ENCODE measurements at regions of chr9 and their contacts with region 1.

Region 1: GRCh38 chr9:21974548-21975409 is 19.4 kb downstream of the CDKN2A start:
- DNase-seq: peak; percentile 75
- H3K4me3 Mint-ChIP-seq: peak overlapping the region; percentile 56
- H3K27ac Mint-ChIP-seq: no peak overlapping the region
- H3K4me1 Mint-ChIP-seq: peaks cover 14% of the 10 kb centered on the region
- H3K27me3 Mint-ChIP-seq: peaks cover 81% of the 10 kb centered on the region

Region 2: DNA sequence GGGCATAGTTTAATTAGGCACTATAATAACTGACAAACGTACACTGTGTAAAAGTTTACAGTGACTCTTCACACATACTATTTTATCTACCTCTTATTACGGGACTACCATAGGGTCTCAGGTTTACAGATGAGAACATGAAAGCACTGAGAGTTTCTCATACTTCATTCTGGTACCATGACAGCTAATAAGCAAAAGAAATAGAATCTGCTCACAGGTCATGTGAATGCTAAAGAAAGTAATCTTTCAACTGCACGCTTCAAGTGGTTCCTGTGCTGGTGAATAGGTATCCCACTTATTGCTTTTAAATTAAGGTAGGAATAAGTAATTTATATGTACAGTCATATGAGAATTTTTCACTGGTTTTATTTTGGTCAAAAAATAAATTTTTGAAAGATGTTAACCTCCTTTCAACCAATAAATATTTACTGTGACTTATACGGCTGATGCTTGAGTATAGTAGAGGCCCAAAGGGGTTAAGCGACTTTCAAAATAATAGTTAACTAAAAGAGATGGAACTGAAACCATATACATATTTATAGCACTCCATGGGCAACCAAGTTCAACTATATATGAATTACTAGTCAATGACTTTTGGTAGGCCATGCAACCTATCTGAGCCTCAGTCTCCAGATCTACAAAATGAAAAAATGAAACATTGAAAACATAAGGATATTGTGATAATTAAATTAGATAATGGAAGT is 11.3 kb after region 1 on chr9:
- CTCF ChIA-PET with region 1: interaction called, 5 read pairs
- intact Hi-C with region 1: loop called (anchors 1 kb)
- DNase-seq: no peak
- H3K4me3 Mint-ChIP-seq: no peak overlapping the region
- H3K27ac Mint-ChIP-seq: no peak overlapping the region
- H3K4me1 Mint-ChIP-seq: peaks cover 3% of the 10 kb centered on the region
- H3K27me3 Mint-ChIP-seq: peaks cover 71% of the 10 kb centered on the region

Region 3: GRCh38 chr9:22060831-22061383 is 86.1 kb after region 1 on chr9:
- CTCF ChIA-PET with region 1: no interaction called
- intact Hi-C with region 1: no loop called
- DNase-seq: no peak
- H3K4me3 Mint-ChIP-seq: no peak overlapping the region
- H3K27ac Mint-ChIP-seq: no peak overlapping the region
- H3K4me1 Mint-ChIP-seq: peaks cover 21% of the 10 kb centered on the region
- H3K27me3 Mint-ChIP-seq: peaks cover 21% of the 10 kb centered on the region

Region 4: DNA sequence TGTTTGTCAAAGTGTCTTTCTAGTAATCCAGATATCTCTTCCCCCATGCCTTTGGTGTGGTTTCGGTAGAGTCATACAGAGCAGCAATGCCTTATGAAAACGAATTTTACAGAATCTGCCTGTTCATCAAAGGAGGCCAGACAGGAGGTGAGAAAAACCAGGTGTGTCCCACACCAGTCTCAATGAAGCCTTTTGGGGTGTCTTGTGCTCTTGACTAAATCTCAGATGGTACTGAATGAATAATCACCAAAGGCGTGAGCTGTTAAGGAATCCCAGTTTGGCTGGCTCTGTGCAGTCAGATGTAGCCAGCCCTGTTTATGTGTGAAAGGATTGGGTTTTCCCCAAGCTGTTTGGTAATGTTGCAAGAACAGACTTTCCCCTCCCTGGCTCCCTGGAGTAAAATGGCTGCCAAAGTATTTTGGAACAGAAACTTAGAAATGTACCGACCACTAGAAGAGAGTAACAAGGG is 105.1 kb after region 1 on chr9:
- CTCF ChIA-PET with region 1: no interaction called
- intact Hi-C with region 1: no loop called
- DNase-seq: peak; percentile 84
- H3K4me3 Mint-ChIP-seq: no peak overlapping the region
- H3K27ac Mint-ChIP-seq: no peak overlapping the region
- H3K4me1 Mint-ChIP-seq: peaks cover 33% of the 10 kb centered on the region
- H3K27me3 Mint-ChIP-seq: peaks cover 50% of the 10 kb centered on the region

Region 5: DNA sequence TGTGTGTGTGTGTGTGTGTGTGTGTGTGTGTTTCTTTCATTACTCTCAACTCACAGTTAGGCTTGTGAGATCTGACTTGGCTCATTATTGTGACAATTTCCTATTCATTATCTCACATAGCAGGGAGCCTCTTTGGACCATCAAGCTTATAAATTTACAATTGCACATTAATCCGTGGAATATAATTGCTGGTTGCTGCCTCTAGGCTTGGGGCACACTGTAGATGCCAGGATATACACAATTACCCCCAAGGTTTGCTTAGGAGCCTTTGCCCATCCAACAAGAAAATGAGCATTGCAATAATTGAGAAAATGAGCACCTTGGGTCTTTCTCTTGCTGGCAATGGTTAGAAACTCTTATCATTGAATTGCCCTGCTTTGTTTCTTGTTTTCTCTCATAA is 310.3 kb after region 1 on chr9:
- CTCF ChIA-PET with region 1: no interaction called
- intact Hi-C with region 1: no loop called
- DNase-seq: no peak
- H3K4me3 Mint-ChIP-seq: no peak overlapping the region
- H3K27ac Mint-ChIP-seq: no peak overlapping the region
- H3K4me1 Mint-ChIP-seq: peaks cover 2% of the 10 kb centered on the region
- H3K27me3 Mint-ChIP-seq: no peaks in the 10 kb centered on the region

Measured in activated naive CD4-positive, alpha-beta T cell treated with anti-CD3 and anti-CD28 coated beads for 36 hours (primary cell).